ENCODE measurements at regions of chr11 and their contacts with region 1.

Region 1: GRCh38 chr11:62841361-62842184 is 2.2 kb upstream of the WDR74 start:
- DNase-seq: peak; percentile 93
- H3K4me3 Mint-ChIP-seq: no peak overlapping the region
- H3K27ac Mint-ChIP-seq: no peak overlapping the region
- H3K4me1 Mint-ChIP-seq: peaks cover 23% of the 10 kb centered on the region
- H3K27me3 Mint-ChIP-seq: no peaks in the 10 kb centered on the region

Region 2: GRCh38 chr11:62573592-62574362 is 267.8 kb before region 1 on chr11 and contains the start of gene EEF1G:
- CTCF ChIA-PET with region 1: no interaction called
- intact Hi-C with region 1: loop called (anchors 5 kb)
- DNase-seq: peak; percentile 99
- H3K4me3 Mint-ChIP-seq: peak within 1 kb of the TSS; percentile 95
- H3K27ac Mint-ChIP-seq: peak within 1 kb of the TSS; percentile 97
- H3K4me1 Mint-ChIP-seq: peaks cover 44% of the 10 kb centered on the region
- H3K27me3 Mint-ChIP-seq: no peaks in the 10 kb centered on the region
- total RNA-seq, gene EEF1G: 2,282 to 2,440 TPM

Region 3: DNA sequence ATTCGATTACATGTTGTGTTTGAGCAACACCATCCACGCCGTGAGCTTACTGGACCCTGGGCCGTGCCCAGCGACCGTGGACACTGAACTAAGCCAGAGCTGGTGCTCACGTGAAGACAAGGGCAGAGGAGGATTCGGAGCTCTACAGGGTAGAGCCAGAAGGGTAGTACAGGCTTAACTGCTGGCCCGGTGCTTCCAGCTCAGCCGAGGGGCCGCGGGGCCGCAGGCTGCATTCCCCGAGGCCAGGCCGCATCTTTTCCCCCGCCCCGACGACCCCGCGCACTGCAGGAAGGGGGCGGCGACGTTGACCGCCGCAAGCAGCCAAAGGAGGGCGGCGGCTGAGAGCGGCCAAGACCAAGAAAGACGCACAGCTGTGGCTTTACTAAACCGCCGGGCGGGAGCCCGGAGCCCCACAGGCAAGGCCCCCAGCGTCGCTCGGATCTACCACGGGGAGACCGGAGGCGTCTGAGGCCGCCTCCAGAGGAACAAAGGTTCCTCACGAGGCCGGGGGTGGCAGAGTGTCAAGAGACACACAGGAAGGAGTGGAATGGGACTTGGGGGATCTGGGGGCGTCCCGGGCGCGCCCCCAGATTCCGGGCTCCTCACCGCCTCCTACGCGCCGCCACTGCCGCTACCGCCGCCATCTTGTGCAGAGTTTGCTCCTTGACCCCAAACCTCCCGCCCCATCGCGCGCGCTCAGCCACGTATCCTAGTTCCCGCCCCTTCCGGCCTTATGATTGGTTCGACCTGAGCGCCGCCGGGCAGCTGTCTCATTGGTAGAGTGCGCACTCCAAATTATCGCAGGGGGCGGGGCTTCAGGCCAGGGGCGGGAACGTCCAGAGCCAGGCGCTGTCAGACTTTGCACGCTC is 195.4 kb before region 1 on chr11 and contains the start of gene GANAB:
- CTCF ChIA-PET with region 1: no interaction called
- intact Hi-C with region 1: loop called (anchors 1 kb)
- DNase-seq: peak; percentile 100
- H3K4me3 Mint-ChIP-seq: peak within 1 kb of the TSS; percentile 99
- H3K27ac Mint-ChIP-seq: peak within 1 kb of the TSS; percentile 95
- H3K4me1 Mint-ChIP-seq: peaks cover 35% of the 10 kb centered on the region
- H3K27me3 Mint-ChIP-seq: no peaks in the 10 kb centered on the region
- total RNA-seq, gene GANAB: 221 to 230 TPM

Region 4: GRCh38 chr11:62705880-62706849 is 135.4 kb before region 1 on chr11:
- CTCF ChIA-PET with region 1: no interaction called
- intact Hi-C with region 1: loop called (anchors 1 kb)
- DNase-seq: peak; percentile 95
- H3K4me3 Mint-ChIP-seq: peak overlapping the region; percentile 88
- H3K27ac Mint-ChIP-seq: peak overlapping the region; percentile 24
- H3K4me1 Mint-ChIP-seq: peaks cover 40% of the 10 kb centered on the region
- H3K27me3 Mint-ChIP-seq: no peaks in the 10 kb centered on the region

Region 5: GRCh38 chr11:62787005-62787759 is 54.4 kb before region 1 on chr11 and contains the start of gene TMEM179B:
- CTCF ChIA-PET with region 1: interaction called, 15 read pairs
- intact Hi-C with region 1: loop called (anchors 1 kb)
- DNase-seq: peak; percentile 99
- H3K4me3 Mint-ChIP-seq: peak within 1 kb of the TSS; percentile 92
- H3K27ac Mint-ChIP-seq: peak within 1 kb of the TSS; percentile 93
- H3K4me1 Mint-ChIP-seq: peaks cover 47% of the 10 kb centered on the region
- H3K27me3 Mint-ChIP-seq: no peaks in the 10 kb centered on the region
- total RNA-seq, gene TMEM179B: 13.9 to 15.2 TPM

Region 6: GRCh38 chr11:62855571-62856332 is 14.2 kb after region 1 on chr11:
- CTCF ChIA-PET with region 1: interaction called, 6 read pairs
- intact Hi-C with region 1: loop called (anchors 1 kb)
- DNase-seq: peak; percentile 98
- H3K4me3 Mint-ChIP-seq: peak overlapping the region; percentile 99
- H3K27ac Mint-ChIP-seq: peak overlapping the region; percentile 96
- H3K4me1 Mint-ChIP-seq: peaks cover 53% of the 10 kb centered on the region
- H3K27me3 Mint-ChIP-seq: no peaks in the 10 kb centered on the region

Region 7: DNA sequence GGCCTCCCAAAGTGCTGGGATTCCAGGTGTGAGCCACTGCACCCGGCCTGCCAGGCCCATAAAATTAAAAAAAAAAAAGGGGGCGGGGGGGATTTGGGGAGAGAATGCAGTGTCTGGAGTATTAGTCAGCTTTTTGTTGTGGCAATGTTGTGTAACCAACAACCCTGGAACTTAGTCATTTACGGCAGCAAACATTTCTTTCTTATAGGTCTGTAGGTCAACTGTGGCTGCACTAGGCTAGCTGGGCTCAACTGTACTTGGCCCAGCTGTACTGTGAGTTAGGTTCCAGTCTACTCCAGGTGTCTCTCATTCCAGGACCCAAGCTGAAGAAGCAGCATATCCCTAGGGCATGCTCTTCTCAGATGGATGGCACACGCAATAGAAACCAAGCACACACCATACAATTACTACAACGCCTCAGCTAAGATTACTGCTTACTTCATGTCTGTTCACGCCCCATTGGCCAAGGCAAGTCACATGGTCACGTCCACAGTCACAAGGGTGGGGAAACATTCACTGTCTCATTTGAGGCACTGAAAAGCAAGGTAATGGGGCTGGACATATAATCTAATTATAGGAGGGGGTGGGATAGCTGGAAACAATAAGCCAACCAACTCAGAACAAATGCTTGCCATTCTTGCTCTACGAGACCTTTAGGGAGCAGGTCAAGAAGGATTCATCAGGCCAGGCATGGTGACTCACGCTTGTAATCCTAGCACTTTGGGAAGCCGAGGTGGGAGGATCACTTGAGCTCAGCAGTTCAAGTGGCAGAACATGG is 961.3 kb after region 1 on chr11:
- CTCF ChIA-PET with region 1: no interaction called
- intact Hi-C with region 1: no loop called
- DNase-seq: no peak
- H3K4me3 Mint-ChIP-seq: no peak overlapping the region
- H3K27ac Mint-ChIP-seq: no peak overlapping the region
- H3K4me1 Mint-ChIP-seq: no peaks in the 10 kb centered on the region
- H3K27me3 Mint-ChIP-seq: peaks cover 4% of the 10 kb centered on the region